ENCODE measurements at regions of chr5 and their contacts with region 1.

Region 1: GRCh38 chr5:141992349-141992963 is 20.4 kb downstream of the GNPDA1 start:
- DNase-seq: peak; percentile 84
- ATAC-seq: peak; percentile 71
- H3K4me3 Mint-ChIP-seq: no peak overlapping the region
- H3K27ac Mint-ChIP-seq: no peak overlapping the region
- H3K4me1 Mint-ChIP-seq: no peaks in the 10 kb centered on the region
- H3K27me3 Mint-ChIP-seq: no peaks in the 10 kb centered on the region

Region 2: GRCh38 chr5:141657937-141658545 is 334.4 kb before region 1 on chr5:
- CTCF ChIA-PET with region 1: no interaction called
- DNase-seq: no peak
- ATAC-seq: peak; percentile 51
- H3K4me3 Mint-ChIP-seq: no peak overlapping the region
- H3K27ac Mint-ChIP-seq: no peak overlapping the region
- H3K4me1 Mint-ChIP-seq: no peaks in the 10 kb centered on the region
- H3K27me3 Mint-ChIP-seq: no peaks in the 10 kb centered on the region

Region 3: GRCh38 chr5:141976176-141976575 is 16.3 kb before region 1 on chr5:
- CTCF ChIA-PET with region 1: interaction called, 22 read pairs
- DNase-seq: no peak
- ATAC-seq: no peak
- H3K4me3 Mint-ChIP-seq: no peak overlapping the region
- H3K27ac Mint-ChIP-seq: no peak overlapping the region
- H3K4me1 Mint-ChIP-seq: peaks cover 16% of the 10 kb centered on the region
- H3K27me3 Mint-ChIP-seq: no peaks in the 10 kb centered on the region

Measured in activated CD8-positive, alpha-beta memory T cell treated with anti-CD3 and anti-CD28 coated beads, Interleukin-2, amount 10 ng/mL, durations not matched to agents 7 days and 5 days (primary cell).